GM12878 (cell line): ENCODE measurements at regions of chr6 and their contacts with region 1.

Region 1: GRCh38 chr6:20319520-20320357 is 81.9 kb upstream of the E2F3 start:
- DNase-seq: peak; percentile 98
- ATAC-seq: peak; percentile 99
- H3K4me3 ChIP-seq: peak overlapping the region; percentile 53; the same call in 1 of the 2 replicates
- H3K27ac ChIP-seq: peak overlapping the region; percentile 83
- H3K4me1 ChIP-seq: peaks cover 9% of the 10 kb centered on the region; the same call in 1 of the 2 replicates
- H3K27me3 ChIP-seq: no peaks in the 10 kb centered on the region
- CTCF ChIP-seq: no peak
- EP300 ChIP-seq: peak; percentile 42 to 95; a peak in 3 of 4 replicates
- POLR2A ChIP-seq: peak; percentile 78
- RAD21 ChIP-seq: 0 out of 2 replicates have a peak, but pooled peaks have one; percentile 11

Region 2: GRCh38 chr6:20279608-20280287 is 40.0 kb before region 1 on chr6:
- CTCF ChIA-PET with region 1: no interaction called
- POLR2A ChIA-PET with region 1: no interaction called
- RAD21 ChIA-PET with region 1: no interaction called
- SMC1A ChIA-PET with region 1: no interaction called
- in situ Hi-C with region 1: no loop called
- intact Hi-C with region 1: no loop called
- DNase-seq: no peak
- ATAC-seq: no peak
- H3K4me3 ChIP-seq: no peak overlapping the region
- H3K27ac ChIP-seq: no peak overlapping the region
- H3K4me1 ChIP-seq: no peaks in the 10 kb centered on the region
- H3K27me3 ChIP-seq: no peaks in the 10 kb centered on the region
- CTCF ChIP-seq: no peak
- EP300 ChIP-seq: no peak
- POLR2A ChIP-seq: no peak
- RAD21 ChIP-seq: no peak

Region 3: DNA sequence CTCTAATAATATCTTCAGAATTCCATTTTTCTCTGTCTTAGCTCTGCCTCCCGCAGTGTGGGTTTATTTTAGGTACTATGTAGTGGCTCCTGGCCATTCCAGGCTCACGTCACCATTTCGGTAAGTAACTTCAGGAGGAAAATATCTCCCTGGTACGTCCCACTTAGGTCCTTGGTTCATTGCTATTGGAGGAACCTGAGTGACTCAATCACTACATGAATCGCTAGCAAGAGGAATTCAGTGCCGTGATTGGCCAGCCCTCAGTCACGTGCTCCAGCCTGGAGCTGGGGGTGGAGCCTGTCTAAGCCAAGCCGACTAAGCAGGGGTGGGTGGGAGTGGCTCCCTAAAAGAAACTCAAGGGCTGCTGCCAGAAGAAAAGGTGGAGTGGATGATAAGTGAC is 14.6 kb after region 1 on chr6:
- CTCF ChIA-PET with region 1: interaction called, 3 read pairs
- POLR2A ChIA-PET with region 1: no interaction called
- RAD21 ChIA-PET with region 1: interaction called, 6 read pairs
- SMC1A ChIA-PET with region 1: interaction called, 12 read pairs
- in situ Hi-C with region 1: no loop called
- intact Hi-C with region 1: no loop called
- DNase-seq: no peak
- ATAC-seq: no peak
- H3K4me3 ChIP-seq: no peak overlapping the region
- H3K27ac ChIP-seq: no peak overlapping the region
- H3K4me1 ChIP-seq: no peaks in the 10 kb centered on the region
- H3K27me3 ChIP-seq: no peaks in the 10 kb centered on the region
- CTCF ChIP-seq: no peak
- EP300 ChIP-seq: no peak
- POLR2A ChIP-seq: no peak
- RAD21 ChIP-seq: no peak

Region 4: DNA sequence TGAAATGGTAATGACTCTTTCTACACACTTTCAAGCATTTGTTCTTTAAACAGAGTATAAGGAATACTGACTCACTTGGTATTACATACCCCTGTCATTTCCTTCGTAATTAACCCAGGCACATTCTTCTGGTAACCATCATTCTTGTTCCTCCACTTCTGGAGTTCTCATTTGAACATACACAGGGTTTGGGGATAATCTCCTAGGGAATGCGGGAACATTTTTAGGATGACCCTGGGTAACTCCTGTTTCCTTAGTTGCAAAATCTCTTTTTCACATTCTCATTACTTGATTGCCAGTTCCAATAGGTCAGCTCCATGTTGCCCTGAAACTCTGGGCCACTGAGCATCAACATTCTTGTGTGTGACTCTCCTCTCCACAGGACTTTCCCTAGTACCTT is 30.5 kb after region 1 on chr6:
- CTCF ChIA-PET with region 1: no interaction called
- POLR2A ChIA-PET with region 1: no interaction called
- RAD21 ChIA-PET with region 1: interaction called, 7 read pairs
- SMC1A ChIA-PET with region 1: interaction called, 18 read pairs
- in situ Hi-C with region 1: no loop called
- intact Hi-C with region 1: no loop called
- DNase-seq: no peak
- ATAC-seq: no peak
- H3K4me3 ChIP-seq: no peak overlapping the region
- H3K27ac ChIP-seq: no peak overlapping the region
- H3K4me1 ChIP-seq: no peaks in the 10 kb centered on the region; the same call in 1 of the 2 replicates
- H3K27me3 ChIP-seq: no peaks in the 10 kb centered on the region
- CTCF ChIP-seq: no peak
- EP300 ChIP-seq: no peak
- POLR2A ChIP-seq: no peak
- RAD21 ChIP-seq: no peak

Region 5: GRCh38 chr6:20366091-20366832 is 46.5 kb after region 1 on chr6:
- CTCF ChIA-PET with region 1: interaction called, 4 read pairs
- POLR2A ChIA-PET with region 1: interaction called, 3 read pairs
- RAD21 ChIA-PET with region 1: interaction called, 13 read pairs
- SMC1A ChIA-PET with region 1: interaction called, 7 read pairs
- in situ Hi-C with region 1: no loop called
- intact Hi-C with region 1: no loop called
- DNase-seq: no peak
- ATAC-seq: peak; percentile 55
- H3K4me3 ChIP-seq: no peak overlapping the region
- H3K27ac ChIP-seq: no peak overlapping the region
- H3K4me1 ChIP-seq: no peaks in the 10 kb centered on the region
- H3K27me3 ChIP-seq: no peaks in the 10 kb centered on the region
- CTCF ChIP-seq: no peak
- EP300 ChIP-seq: no peak
- POLR2A ChIP-seq: no peak
- RAD21 ChIP-seq: no peak

Region 6: DNA sequence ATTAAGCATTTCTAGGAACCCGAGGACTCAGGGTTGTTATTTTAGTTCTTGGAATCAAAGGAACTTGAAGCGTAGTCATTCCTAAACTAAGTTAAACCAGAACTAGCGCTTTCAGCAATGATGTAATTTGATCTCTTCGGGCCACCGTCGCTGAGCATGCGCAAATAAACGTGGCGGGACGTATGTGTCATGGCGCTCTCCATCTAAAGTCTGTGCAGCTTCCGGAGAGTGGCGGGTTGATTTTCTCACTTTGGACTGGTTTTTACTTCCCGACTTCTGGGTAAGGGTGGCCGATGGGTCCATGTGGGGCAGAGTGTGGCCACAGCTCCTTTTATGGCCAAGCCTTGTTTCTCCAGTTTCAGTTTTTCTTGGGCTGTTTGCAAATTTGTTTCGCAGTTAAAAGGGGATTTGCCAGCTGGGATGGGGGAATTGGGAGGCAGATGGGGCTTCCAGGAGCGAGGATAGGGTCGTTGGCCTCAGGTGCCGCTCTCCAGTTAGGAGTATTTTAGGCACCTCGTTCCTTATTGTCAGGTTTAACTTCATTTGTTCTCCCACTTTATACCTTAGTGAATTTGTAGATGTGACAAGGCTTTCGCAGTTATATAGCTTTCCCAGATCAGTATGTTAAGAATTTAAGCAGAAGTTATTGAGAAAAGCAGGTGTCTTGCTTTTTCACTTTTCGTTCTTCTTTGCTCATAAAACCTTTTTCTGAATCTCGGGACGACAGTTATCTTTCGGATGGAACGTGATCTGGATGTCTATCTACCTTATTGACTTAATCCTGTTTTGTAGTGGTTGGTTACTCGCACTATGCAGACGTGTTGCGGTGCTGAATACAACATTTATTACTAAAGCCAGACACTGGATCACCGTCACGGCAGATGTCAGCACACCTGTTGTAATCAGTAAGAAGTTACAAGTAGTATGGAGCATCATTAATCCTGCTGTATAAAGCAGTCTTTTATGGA is 214.8 kb after region 1 on chr6 and contains the start of gene CDKAL1:
- CTCF ChIA-PET with region 1: interaction called, 13 read pairs
- POLR2A ChIA-PET with region 1: interaction called, 4 read pairs
- RAD21 ChIA-PET with region 1: interaction called, 3 read pairs
- SMC1A ChIA-PET with region 1: no interaction called
- in situ Hi-C with region 1: no loop called
- intact Hi-C with region 1: no loop called
- DNase-seq: peak; percentile 91
- ATAC-seq: peak; percentile 89
- H3K4me3 ChIP-seq: peak within 1 kb of the TSS; percentile 93
- H3K27ac ChIP-seq: peak within 1 kb of the TSS; percentile 89
- H3K4me1 ChIP-seq: peaks cover 6% of the 10 kb centered on the region; the same call in 1 of the 2 replicates
- H3K27me3 ChIP-seq: no peaks in the 10 kb centered on the region
- CTCF ChIP-seq: no peak
- EP300 ChIP-seq: no peak
- POLR2A ChIP-seq: peak; percentile 87
- RAD21 ChIP-seq: no peak
- polyA plus RNA-seq, gene CDKAL1: 10.7 to 10.9 TPM